HCT116 (cell line): ENCODE measurements at regions of chr14 and their contacts with region 1.

Region 1: DNA sequence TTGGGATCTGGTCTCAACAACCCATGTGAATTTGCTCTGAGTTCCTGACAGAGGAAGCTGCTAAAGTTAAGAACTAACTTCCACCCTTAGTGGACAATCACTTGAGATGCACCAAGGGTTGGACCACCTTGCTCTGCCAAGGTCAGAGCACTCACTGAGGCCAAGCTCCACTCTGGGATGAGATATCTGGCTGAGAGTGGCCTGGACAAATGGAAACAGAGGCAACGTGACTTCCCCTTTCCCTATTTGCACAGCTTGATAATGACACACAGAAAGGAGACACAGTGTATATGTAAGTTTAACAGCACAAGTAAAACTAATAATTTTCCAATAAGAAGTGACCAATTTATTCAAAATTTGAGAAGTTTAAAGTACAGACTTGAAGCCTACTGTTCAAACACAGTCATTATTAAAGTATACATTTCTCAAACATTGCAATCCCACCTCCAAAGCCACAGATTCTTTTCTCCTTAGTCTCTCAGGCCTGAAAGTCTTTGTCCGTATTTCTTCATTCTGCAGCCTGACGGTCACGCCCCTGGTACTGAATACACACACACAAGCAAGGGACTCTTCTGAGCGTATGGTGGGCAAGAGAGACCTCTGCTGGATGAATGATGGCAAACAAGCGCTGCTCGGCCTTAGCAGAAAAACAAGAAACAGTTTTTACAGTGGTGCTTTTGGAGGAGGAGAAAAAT is 28.6 kb downstream of the TMEM30B start:
- DNase-seq: peak; percentile 72
- ATAC-seq: peak; percentile 99
- H3K4me3 ChIP-seq: no peak overlapping the region
- H3K27ac ChIP-seq: no peak overlapping the region
- H3K4me1 ChIP-seq: peaks cover 0 to 5% of the 10 kb centered on the region in 2 experiments; a peak in 2 of 4 replicates
- H3K27me3 ChIP-seq: no peaks in the 10 kb centered on the region
- CTCF ChIP-seq: peak; percentile 83 to 94 (median 92); a peak in 5 of 6 replicates
- POLR2A ChIP-seq: no peak
- RAD21 ChIP-seq: peak; percentile 97

Region 2: GRCh38 chr14:59964251-59965007 is 1288.1 kb before region 1 on chr14:
- CTCF ChIA-PET with region 1: no interaction called
- POLR2A ChIA-PET with region 1: no interaction called
- RAD21 ChIA-PET with region 1: no interaction called
- intact Hi-C with region 1: loop called (anchors 10 kb)
- DNase-seq: no peak
- ATAC-seq: peak; percentile 49
- H3K4me3 ChIP-seq: no peak overlapping the region
- H3K27ac ChIP-seq: no peak overlapping the region
- H3K4me1 ChIP-seq: peaks cover 0 to 4% of the 10 kb centered on the region in 2 experiments; a peak in 1 of 4 replicates
- H3K27me3 ChIP-seq: no peaks in the 10 kb centered on the region
- CTCF ChIP-seq: no peak
- POLR2A ChIP-seq: no peak
- RAD21 ChIP-seq: no peak

Region 3: GRCh38 chr14:60349663-60350365 is 902.7 kb before region 1 on chr14:
- CTCF ChIA-PET with region 1: interaction called, 6 read pairs
- POLR2A ChIA-PET with region 1: no interaction called
- RAD21 ChIA-PET with region 1: no interaction called
- intact Hi-C with region 1: loop called (anchors 1 kb)
- DNase-seq: peak; percentile 39
- ATAC-seq: peak; percentile 90
- H3K4me3 ChIP-seq: no peak overlapping the region
- H3K27ac ChIP-seq: no peak overlapping the region
- H3K4me1 ChIP-seq: no peaks in the 10 kb centered on the region
- H3K27me3 ChIP-seq: no peaks in the 10 kb centered on the region
- CTCF ChIP-seq: peak; percentile 57 to 78 (median 64)
- POLR2A ChIP-seq: no peak
- RAD21 ChIP-seq: peak; percentile 65

Region 4: DNA sequence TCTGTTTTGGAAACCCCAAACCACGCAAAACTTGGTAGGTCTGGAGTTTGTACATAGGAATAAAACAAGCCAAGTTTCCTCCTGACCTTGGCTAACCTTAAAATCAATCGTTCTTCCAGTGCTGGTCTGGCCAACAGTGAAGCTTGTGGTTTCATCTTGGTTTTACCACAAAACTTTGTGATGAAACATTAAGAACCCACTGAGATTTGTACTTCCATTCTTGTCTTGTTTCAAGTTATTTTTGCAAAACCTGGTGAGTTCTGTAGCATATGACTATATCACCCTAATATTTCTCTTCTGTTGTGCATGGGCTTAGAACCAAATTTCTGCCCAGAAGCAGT is 629.6 kb before region 1 on chr14:
- CTCF ChIA-PET with region 1: interaction called, 37 read pairs
- POLR2A ChIA-PET with region 1: interaction called, 3 read pairs
- RAD21 ChIA-PET with region 1: interaction called, 3 to 4 read pairs
- intact Hi-C with region 1: loop called (anchors 1 kb)
- DNase-seq: no peak
- ATAC-seq: no peak
- H3K4me3 ChIP-seq: no peak overlapping the region
- H3K27ac ChIP-seq: no peak overlapping the region
- H3K4me1 ChIP-seq: peaks cover 0 to 7% of the 10 kb centered on the region in 2 experiments; a peak in 1 of 4 replicates
- H3K27me3 ChIP-seq: no peaks in the 10 kb centered on the region
- CTCF ChIP-seq: no peak
- POLR2A ChIP-seq: no peak
- RAD21 ChIP-seq: no peak

Region 5: DNA sequence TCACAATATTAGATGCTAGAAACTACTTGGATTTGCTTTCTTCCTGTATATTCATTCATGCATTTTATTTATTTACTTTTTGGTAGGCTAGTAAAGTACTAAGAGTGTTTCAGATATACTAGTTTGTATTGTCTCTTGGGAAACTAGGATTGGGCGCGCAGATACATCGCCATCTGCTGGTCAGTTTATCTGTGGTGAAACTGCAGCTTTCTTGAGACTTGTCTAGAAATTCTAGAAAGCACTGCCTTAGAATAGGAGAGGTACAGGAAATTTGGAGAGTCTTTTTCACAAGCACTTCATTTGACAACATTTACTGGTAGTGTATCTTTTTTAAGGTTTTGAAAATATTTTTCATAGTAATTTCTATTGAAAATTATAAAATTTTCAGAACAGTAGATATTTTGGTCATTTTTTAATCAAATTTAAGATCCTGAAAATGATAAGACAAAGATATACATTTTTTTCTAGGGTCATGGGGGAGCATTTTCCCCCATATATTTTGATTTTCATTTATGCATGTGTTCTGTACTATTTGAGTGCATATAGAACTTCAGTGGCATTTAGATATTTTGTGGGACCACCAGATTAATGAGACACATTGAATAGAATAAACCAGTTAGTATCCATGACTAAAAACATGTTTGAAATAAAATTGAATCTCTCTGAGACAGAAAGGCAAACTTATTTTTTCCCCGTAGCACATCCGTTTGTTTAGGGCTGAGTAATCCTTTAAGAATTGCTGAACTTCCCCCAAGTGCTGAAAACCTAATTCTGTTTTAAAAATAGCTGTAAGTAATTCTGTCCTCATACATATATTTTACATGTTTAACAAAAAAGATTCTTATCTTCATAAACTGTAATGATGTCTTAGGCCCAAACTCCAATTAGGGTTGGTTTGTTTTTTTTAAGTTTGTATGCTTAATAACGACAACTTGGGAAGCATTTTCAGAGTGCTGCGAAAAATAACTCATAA is 227.0 kb before region 1 on chr14:
- CTCF ChIA-PET with region 1: interaction called, 3 read pairs
- POLR2A ChIA-PET with region 1: no interaction called
- RAD21 ChIA-PET with region 1: no interaction called
- intact Hi-C with region 1: loop called (anchors 1 kb)
- DNase-seq: peak; percentile 41
- ATAC-seq: peak; percentile 82
- H3K4me3 ChIP-seq: no peak overlapping the region
- H3K27ac ChIP-seq: no peak overlapping the region
- H3K4me1 ChIP-seq: no peaks in the 10 kb centered on the region
- H3K27me3 ChIP-seq: no peaks in the 10 kb centered on the region
- CTCF ChIP-seq: peak; percentile 72 to 93 (median 89)
- POLR2A ChIP-seq: no peak
- RAD21 ChIP-seq: peak; percentile 89

Region 6: DNA sequence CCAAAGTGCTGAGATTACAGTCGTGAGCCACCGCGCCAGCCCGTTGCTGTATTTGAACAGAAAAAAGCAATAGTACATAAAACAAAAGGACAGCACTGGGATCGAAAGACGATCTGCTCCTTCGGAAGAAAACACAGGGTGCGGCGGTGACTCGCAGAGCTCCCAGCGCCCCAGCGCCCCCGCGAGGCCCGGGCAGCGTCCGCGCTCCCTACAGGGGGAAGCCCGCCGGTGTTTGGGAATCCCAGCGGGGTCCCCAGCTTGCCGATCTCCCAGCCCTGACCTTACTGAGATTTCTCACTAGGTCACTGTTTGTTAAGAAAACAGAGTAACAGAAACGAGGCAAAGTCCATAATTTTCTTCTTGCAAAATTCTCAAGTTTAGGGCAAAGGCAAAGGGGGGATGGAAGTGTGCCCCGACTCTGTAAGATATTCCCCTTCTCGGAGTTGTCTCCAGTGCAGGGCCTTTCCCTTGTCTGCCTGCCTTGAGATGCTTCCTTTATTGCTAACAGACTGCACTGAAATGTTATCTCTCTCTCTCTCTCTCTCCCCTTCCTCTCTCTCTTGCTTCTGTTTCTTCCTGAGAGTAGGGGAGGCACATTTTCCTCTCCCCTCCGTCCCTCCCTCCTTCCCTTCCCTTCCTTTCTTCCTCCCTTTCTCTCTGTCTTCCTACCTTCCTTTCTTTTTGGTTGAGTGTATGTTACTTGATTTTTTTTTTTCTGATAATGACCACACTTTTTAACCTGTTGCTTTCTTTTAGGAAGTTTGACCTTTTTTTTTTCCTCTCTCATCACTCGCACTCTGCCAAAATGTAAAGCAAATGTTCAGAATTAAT is 63.3 kb before region 1 on chr14:
- CTCF ChIA-PET with region 1: no interaction called
- POLR2A ChIA-PET with region 1: no interaction called
- RAD21 ChIA-PET with region 1: no interaction called
- intact Hi-C with region 1: no loop called
- DNase-seq: no peak
- ATAC-seq: peak; percentile 87
- H3K4me3 ChIP-seq: peak overlapping the region; percentile 35 to 47
- H3K27ac ChIP-seq: no peak overlapping the region
- H3K4me1 ChIP-seq: peaks cover 0 to 7% of the 10 kb centered on the region in 2 experiments; a peak in 1 of 4 replicates
- H3K27me3 ChIP-seq: no peaks in the 10 kb centered on the region
- CTCF ChIP-seq: peak; percentile 15 to 52 (median 51); a peak in 5 of 6 replicates
- POLR2A ChIP-seq: no peak
- RAD21 ChIP-seq: peak; percentile 63